Heart left ventricle (tissue), 16 donors: ENCODE measurements at regions of chr9 and their contacts with region 1.

Region 1: DNA sequence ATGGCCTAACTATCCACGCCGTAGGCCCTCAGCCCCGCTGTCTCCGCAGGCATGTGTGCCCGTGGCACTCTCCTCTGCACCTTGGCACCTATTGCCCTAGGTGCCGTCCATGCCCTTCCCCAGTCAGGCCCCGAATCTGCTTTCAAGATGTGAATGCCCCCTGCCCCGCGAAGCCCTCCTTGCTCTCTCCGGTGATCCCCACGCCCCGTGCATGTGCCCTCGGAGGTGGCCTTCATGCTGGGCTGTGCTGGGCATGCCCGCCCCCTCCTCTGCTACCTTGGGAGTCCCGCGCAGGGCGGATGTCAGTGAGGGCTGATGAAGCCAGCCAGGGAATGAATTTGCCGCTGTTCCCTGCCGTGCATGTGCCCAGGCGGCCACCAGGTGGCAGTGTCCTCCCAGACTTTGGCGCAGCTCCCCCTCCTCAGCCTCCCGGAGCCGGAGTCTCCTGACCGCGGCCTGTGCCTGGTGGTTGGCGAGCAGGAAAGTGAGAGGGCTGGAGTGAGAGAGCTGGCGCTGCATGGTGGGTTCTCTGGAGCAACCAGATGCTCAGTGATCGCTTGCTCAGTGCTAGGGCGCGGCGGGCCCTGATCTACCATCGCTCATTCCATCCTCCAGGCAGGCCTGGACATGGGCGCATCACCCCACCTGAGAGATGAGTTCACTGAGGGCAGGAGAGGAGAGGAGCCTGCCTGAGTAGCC is 112.9 kb upstream of the LMX1B start:
- DNase-seq: peak; percentile 75 to 87 (median 79)
- ATAC-seq: peak; percentile 56 to 83 (median 72)
- H3K4me3 ChIP-seq: no peak overlapping the region
- H3K27ac ChIP-seq: no peak overlapping the region
- H3K4me1 ChIP-seq: peaks cover 0 to 26% (median 14%) of the 10 kb centered on the region in 12 donors
- H3K27me3 ChIP-seq: peaks cover 0 to 14% (median 0%) of the 10 kb centered on the region in 9 donors
- CTCF ChIP-seq: peak in 11 of 12 donors; percentile 93 to 98 (median 97)
- POLR2A ChIP-seq: no peak

Region 2: GRCh38 chr9:126448865-126449537 is 51.8 kb before region 1 on chr9:
- intact Hi-C with region 1: no loop called
- DNase-seq: peak in 1 of 5 donors; percentile 40
- ATAC-seq: no peak
- H3K4me3 ChIP-seq: no peak overlapping the region
- H3K27ac ChIP-seq: no peak overlapping the region
- H3K4me1 ChIP-seq: no peaks in the 10 kb centered on the region
- H3K27me3 ChIP-seq: no peaks in the 10 kb centered on the region
- CTCF ChIP-seq: no peak
- POLR2A ChIP-seq: no peak

Region 3: GRCh38 chr9:126558051-126558665 is 57.3 kb after region 1 on chr9:
- intact Hi-C with region 1: loop called (anchors 1 to 5 kb)
- DNase-seq: peak; percentile 46 to 76 (median 51)
- ATAC-seq: peak in 3 of 4 donors; percentile 75 to 78 (median 77)
- H3K4me3 ChIP-seq: no peak overlapping the region
- H3K27ac ChIP-seq: no peak overlapping the region
- H3K4me1 ChIP-seq: no peaks in the 10 kb centered on the region
- H3K27me3 ChIP-seq: peaks cover 0 to 16% (median 0%) of the 10 kb centered on the region in 9 donors
- CTCF ChIP-seq: peak; percentile 80 to 95 (median 88)
- POLR2A ChIP-seq: no peak

Region 4: GRCh38 chr9:126682928-126683697 is 182.3 kb after region 1 on chr9:
- intact Hi-C with region 1: loop called in 3 of 10 experiments (anchors 5 to 10 kb)
- DNase-seq: peak in 4 of 5 donors; percentile 27 to 68 (median 42)
- ATAC-seq: peak in 3 of 4 donors; percentile 13 to 71 (median 36)
- H3K4me3 ChIP-seq: peak overlapping the region in 9 of 12 donors; percentile 10 to 43 (median 25)
- H3K27ac ChIP-seq: no peak overlapping the region
- H3K4me1 ChIP-seq: peaks cover 0 to 12% (median 0%) of the 10 kb centered on the region in 12 donors
- H3K27me3 ChIP-seq: peaks cover 0 to 66% (median 35%) of the 10 kb centered on the region in 9 donors
- CTCF ChIP-seq: no peak
- POLR2A ChIP-seq: no peak

Region 5: GRCh38 chr9:126690431-126691350 is 189.9 kb after region 1 on chr9:
- intact Hi-C with region 1: loop called in 6 of 10 experiments (anchors 5 to 10 kb)
- DNase-seq: peak in 3 of 5 donors; percentile 51 to 71 (median 51)
- ATAC-seq: peak in 3 of 4 donors; percentile 33 to 70 (median 39)
- H3K4me3 ChIP-seq: no peak overlapping the region
- H3K27ac ChIP-seq: no peak overlapping the region
- H3K4me1 ChIP-seq: no peaks in the 10 kb centered on the region
- H3K27me3 ChIP-seq: peaks cover 0 to 37% (median 14%) of the 10 kb centered on the region in 9 donors
- CTCF ChIP-seq: peak; percentile 45 to 71 (median 58)
- POLR2A ChIP-seq: no peak

Region 6: GRCh38 chr9:126781186-126782052 is 280.6 kb after region 1 on chr9:
- intact Hi-C with region 1: loop called in 9 of 10 experiments (anchors 2 to 5 kb)
- DNase-seq: peak; percentile 77 to 89 (median 79)
- ATAC-seq: peak; percentile 79 to 86 (median 81)
- H3K4me3 ChIP-seq: peak overlapping the region in 3 of 12 donors; percentile 4 to 26 (median 9)
- H3K27ac ChIP-seq: no peak overlapping the region
- H3K4me1 ChIP-seq: peaks cover 0 to 17% (median 5%) of the 10 kb centered on the region in 12 donors
- H3K27me3 ChIP-seq: peaks cover 0 to 34% (median 3%) of the 10 kb centered on the region in 9 donors
- CTCF ChIP-seq: peak; percentile 89 to 98 (median 95)
- POLR2A ChIP-seq: no peak